Posterior vena cava (tissue), 2 donors: ENCODE measurements at regions of chr13 and their contacts with region 1.

Region 1: GRCh38 chr13:49840266-49840665 is 47.8 kb upstream of the KPNA3 start:
- DNase-seq: no peak

Region 2: GRCh38 chr13:49652355-49653305 is 187.6 kb before region 1 on chr13:
- intact Hi-C with region 1: loop called in 1 of 2 experiments (anchors 5 kb)
- DNase-seq: no peak